GM12878 (cell line): ENCODE measurements at regions of chr4 and their contacts with region 1.

Region 1: GRCh38 chr4:98601708-98602107 is 56.7 kb downstream of the TSPAN5 start:
- DNase-seq: no peak
- ATAC-seq: peak; percentile 81
- H3K4me3 ChIP-seq: no peak overlapping the region
- H3K27ac ChIP-seq: no peak overlapping the region
- H3K4me1 ChIP-seq: no peaks in the 10 kb centered on the region
- H3K27me3 ChIP-seq: no peaks in the 10 kb centered on the region
- CTCF ChIP-seq: no peak; a peak in 1 of 6 replicates
- EP300 ChIP-seq: no peak
- POLR2A ChIP-seq: no peak
- RAD21 ChIP-seq: no peak

Region 2: GRCh38 chr4:98658287-98659105 is 56.8 kb after region 1 on chr4 and contains the start of gene TSPAN5:
- CTCF ChIA-PET with region 1: no interaction called
- POLR2A ChIA-PET with region 1: interaction called, 3 read pairs
- RAD21 ChIA-PET with region 1: interaction called, 3 read pairs
- SMC1A ChIA-PET with region 1: interaction called, 4 read pairs
- in situ Hi-C with region 1: no loop called
- intact Hi-C with region 1: loop called (anchors 2 kb)
- DNase-seq: no peak
- ATAC-seq: peak; percentile 84
- H3K4me3 ChIP-seq: peak within 1 kb of the TSS; percentile 65
- H3K27ac ChIP-seq: no peak within 1 kb of the TSS
- H3K4me1 ChIP-seq: peaks cover 10% of the 10 kb centered on the region
- H3K27me3 ChIP-seq: peaks cover 4 to 23% of the 10 kb centered on the region in 2 experiments
- CTCF ChIP-seq: no peak
- EP300 ChIP-seq: no peak
- POLR2A ChIP-seq: peak; percentile 33; the same call in 1 of the 2 replicates
- RAD21 ChIP-seq: no peak
- polyA plus RNA-seq, gene TSPAN5: 0.22 to 0.23 TPM